B cell (primary cell): ENCODE measurements at regions of chr3 and their contacts with region 1.

Region 1: DNA sequence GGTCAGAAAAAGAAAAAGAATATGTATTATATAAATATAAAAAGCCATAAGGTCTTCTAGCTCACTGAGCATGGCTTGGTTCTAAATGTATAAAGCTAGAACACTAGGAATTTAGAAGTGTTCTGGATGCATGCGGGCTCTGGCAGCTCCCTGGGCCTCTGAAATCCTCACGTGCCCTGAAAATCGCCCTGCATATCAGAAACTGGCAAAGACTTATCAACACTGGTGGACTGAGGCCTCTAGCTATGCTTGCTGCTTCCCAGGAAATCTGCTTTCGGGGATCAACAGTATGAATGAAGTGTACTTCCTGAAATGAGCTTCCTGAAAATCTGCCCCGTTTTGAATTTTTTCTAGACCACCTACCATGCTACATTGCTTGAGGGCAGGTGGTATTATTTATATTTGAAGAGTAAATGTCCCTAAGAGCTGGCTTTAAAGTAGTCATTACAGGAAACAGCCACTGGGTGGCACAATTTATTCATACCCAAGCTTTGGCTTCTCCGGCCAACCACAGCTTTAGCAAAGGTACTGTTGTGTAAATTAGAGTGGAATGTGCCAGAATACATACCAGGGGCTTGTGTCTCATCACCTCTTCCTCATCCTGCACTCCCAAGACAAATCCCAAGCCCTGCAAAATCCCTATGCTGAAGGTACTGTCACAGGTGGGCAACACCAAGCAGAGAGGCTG is 17.7 kb downstream of the CRTAP start:
- DNase-seq: peak; percentile 70
- ATAC-seq: peak; percentile 66
- H3K4me3 ChIP-seq: no peak overlapping the region
- H3K4me3 Mint-ChIP-seq: no peak overlapping the region
- H3K27ac ChIP-seq: no peak overlapping the region
- H3K27ac Mint-ChIP-seq: no peak overlapping the region
- H3K4me1 ChIP-seq: no peaks in the 10 kb centered on the region
- H3K4me1 Mint-ChIP-seq: no peaks in the 10 kb centered on the region
- H3K27me3 ChIP-seq: no peaks in the 10 kb centered on the region
- H3K27me3 Mint-ChIP-seq: no peaks in the 10 kb centered on the region
- CTCF ChIP-seq: peak; percentile 89

Region 2: GRCh38 chr3:31680072-31680870 is 1451.2 kb before region 1 on chr3:
- CTCF ChIA-PET with region 1: no interaction called
- POLR2A ChIA-PET with region 1: no interaction called
- intact Hi-C with region 1: no loop called
- DNase-seq: no peak
- ATAC-seq: no peak
- H3K4me3 ChIP-seq: no peak overlapping the region
- H3K4me3 Mint-ChIP-seq: no peak overlapping the region
- H3K27ac ChIP-seq: no peak overlapping the region
- H3K27ac Mint-ChIP-seq: peak overlapping the region; percentile 26
- H3K4me1 ChIP-seq: no peaks in the 10 kb centered on the region
- H3K4me1 Mint-ChIP-seq: no peaks in the 10 kb centered on the region
- H3K27me3 ChIP-seq: no peaks in the 10 kb centered on the region
- H3K27me3 Mint-ChIP-seq: no peaks in the 10 kb centered on the region
- CTCF ChIP-seq: no peak

Region 3: DNA sequence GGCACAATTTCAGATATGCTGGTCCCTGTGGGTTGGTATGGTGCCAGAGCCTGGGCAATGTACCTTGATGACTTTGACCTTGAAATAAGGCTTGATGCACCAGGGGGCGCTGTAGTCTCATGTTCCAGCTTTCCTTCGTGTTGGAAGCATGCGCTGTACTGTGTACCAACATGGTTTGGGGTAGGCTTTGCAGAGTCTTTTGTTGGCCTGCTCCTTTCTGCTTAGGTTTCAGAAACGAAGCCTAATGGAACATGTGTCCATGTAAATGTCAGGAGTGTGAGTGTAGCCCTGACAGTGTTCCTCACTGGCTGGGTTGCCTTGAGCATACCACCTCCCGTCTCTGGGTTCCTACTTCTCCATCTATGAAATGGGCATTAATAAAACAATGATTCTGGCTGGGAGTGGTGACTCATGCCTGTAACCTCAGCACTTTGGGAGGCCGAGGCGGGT is 183.7 kb before region 1 on chr3:
- CTCF ChIA-PET with region 1: interaction called, 23 read pairs
- POLR2A ChIA-PET with region 1: no interaction called
- intact Hi-C with region 1: no loop called
- DNase-seq: peak; percentile 88
- ATAC-seq: peak; percentile 83
- H3K4me3 ChIP-seq: no peak overlapping the region
- H3K4me3 Mint-ChIP-seq: no peak overlapping the region
- H3K27ac ChIP-seq: no peak overlapping the region
- H3K27ac Mint-ChIP-seq: no peak overlapping the region
- H3K4me1 ChIP-seq: peaks cover 0 to 18% of the 10 kb centered on the region in 2 donors
- H3K4me1 Mint-ChIP-seq: peaks cover 13% of the 10 kb centered on the region
- H3K27me3 ChIP-seq: no peaks in the 10 kb centered on the region
- H3K27me3 Mint-ChIP-seq: no peaks in the 10 kb centered on the region
- CTCF ChIP-seq: peak; percentile 87

Region 4: DNA sequence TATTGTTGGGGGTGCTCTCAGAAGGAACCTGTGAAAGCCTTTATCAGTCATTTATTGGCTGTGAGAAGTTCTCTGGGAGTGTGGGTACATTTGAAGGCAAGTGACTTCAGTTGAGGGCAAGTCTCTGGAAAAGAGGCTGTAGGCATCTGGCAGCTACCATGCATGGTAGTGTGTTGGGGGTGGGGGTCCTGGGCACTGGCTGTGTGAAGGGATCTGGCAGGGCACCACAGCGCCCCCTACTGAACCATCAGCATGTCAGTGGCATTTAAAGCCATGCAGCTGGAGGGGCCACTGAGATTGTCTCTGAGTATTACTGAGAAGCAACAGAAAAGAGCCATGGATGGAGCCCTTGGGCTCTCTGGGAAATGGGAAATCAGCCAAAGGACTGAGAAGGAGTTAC is 13.0 kb after region 1 on chr3:
- CTCF ChIA-PET with region 1: interaction called, 23 read pairs
- POLR2A ChIA-PET with region 1: no interaction called
- intact Hi-C with region 1: no loop called
- DNase-seq: peak; percentile 25
- ATAC-seq: no peak
- H3K4me3 ChIP-seq: no peak overlapping the region
- H3K4me3 Mint-ChIP-seq: no peak overlapping the region
- H3K27ac ChIP-seq: no peak overlapping the region
- H3K27ac Mint-ChIP-seq: no peak overlapping the region
- H3K4me1 ChIP-seq: peaks cover under 1 to 3% of the 10 kb centered on the region in 2 donors
- H3K4me1 Mint-ChIP-seq: peaks cover 8% of the 10 kb centered on the region
- H3K27me3 ChIP-seq: no peaks in the 10 kb centered on the region
- H3K27me3 Mint-ChIP-seq: no peaks in the 10 kb centered on the region
- CTCF ChIP-seq: peak; percentile 55

Region 5: DNA sequence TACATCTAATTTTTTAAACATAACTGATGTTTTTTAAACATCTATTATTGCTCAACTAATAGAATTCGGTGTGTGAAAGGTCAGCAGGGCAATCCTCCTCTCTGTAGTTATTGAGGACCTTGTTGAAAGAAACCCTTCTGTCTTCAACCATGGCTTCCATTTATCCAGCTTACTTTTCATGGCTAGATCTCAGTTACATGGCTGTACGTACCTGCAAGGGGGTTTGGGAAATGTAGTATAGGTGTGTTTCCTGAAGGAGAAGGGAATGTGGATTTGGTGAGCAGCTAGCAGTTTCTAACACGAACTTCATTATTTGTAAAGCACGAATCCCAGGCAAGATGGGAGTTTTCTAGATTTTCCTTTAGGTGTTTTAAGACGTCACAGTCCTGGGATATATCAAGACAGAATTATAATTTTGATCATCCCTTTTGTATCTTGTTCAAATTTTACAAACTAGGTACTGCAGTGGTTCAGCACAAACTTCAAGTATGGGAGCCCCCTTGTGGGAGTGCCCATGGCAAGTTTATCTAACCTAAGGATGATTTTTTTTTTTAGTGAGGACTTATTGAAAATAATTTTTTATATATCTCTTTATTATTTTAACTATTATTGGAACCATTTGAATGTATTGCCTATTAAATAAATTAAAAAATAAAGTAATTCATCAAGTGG is 187.4 kb after region 1 on chr3:
- CTCF ChIA-PET with region 1: no interaction called
- POLR2A ChIA-PET with region 1: no interaction called
- intact Hi-C with region 1: loop called (anchors 5 kb)
- DNase-seq: no peak
- ATAC-seq: no peak
- H3K4me3 ChIP-seq: no peak overlapping the region
- H3K4me3 Mint-ChIP-seq: no peak overlapping the region
- H3K27ac ChIP-seq: no peak overlapping the region
- H3K27ac Mint-ChIP-seq: no peak overlapping the region
- H3K4me1 ChIP-seq: no peaks in the 10 kb centered on the region
- H3K4me1 Mint-ChIP-seq: no peaks in the 10 kb centered on the region
- H3K27me3 ChIP-seq: peaks cover 0 to 2% (median 0%) of the 10 kb centered on the region in 4 experiments
- H3K27me3 Mint-ChIP-seq: peaks cover 30% of the 10 kb centered on the region
- CTCF ChIP-seq: no peak

Region 6: DNA sequence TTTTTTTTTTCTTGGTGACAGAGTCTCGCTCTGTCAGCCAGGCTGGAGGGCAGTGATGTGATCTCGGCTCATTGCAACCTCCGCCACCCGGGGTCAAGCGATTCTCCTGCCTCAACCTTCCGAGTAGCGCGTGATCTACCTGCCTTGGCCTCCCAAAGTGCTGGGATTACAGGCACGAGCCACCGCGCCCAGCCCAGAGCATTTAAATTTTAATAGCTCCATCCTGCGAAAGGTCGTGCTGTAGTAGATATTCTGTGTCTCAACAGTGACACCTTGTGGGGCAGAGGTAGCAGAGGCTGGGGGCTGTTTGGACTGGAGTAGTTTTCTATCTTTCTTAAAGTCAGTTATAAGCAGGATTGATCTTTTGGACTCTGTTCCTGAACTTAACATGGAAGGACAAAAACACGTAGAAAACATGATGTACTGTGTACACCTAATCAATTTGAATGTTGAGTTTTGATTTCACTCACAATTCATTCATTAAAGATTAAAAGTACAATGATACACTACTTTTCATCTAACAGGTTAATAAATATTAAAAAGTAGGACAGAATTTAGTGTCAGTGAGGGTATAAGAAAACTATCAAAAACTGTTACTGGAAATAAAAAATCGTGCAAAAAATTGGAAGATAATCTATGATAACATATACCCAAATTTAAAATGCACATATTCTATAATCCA is 656.0 kb after region 1 on chr3:
- CTCF ChIA-PET with region 1: interaction called, 54 read pairs
- POLR2A ChIA-PET with region 1: no interaction called
- intact Hi-C with region 1: no loop called
- DNase-seq: peak; percentile 78
- ATAC-seq: peak; percentile 93
- H3K4me3 ChIP-seq: peak overlapping the region in 2 of 5 experiments; percentile 17 to 34
- H3K4me3 Mint-ChIP-seq: peak overlapping the region; percentile 42
- H3K27ac ChIP-seq: no peak overlapping the region
- H3K27ac Mint-ChIP-seq: no peak overlapping the region
- H3K4me1 ChIP-seq: peaks cover 3 to 4% of the 10 kb centered on the region in 2 donors
- H3K4me1 Mint-ChIP-seq: peaks cover 7% of the 10 kb centered on the region
- H3K27me3 ChIP-seq: no peaks in the 10 kb centered on the region
- H3K27me3 Mint-ChIP-seq: no peaks in the 10 kb centered on the region
- CTCF ChIP-seq: peak; percentile 92